Posterior cingulate gyrus (tissue), 11 donors: ENCODE measurements at regions of chr19 and their contacts with region 1.

Region 1: GRCh38 chr19:4471403-4472173 is 509 bp upstream of the HDGFL2 start:
- DNase-seq: peak; percentile 96 to 100 (median 98)

Region 2: DNA sequence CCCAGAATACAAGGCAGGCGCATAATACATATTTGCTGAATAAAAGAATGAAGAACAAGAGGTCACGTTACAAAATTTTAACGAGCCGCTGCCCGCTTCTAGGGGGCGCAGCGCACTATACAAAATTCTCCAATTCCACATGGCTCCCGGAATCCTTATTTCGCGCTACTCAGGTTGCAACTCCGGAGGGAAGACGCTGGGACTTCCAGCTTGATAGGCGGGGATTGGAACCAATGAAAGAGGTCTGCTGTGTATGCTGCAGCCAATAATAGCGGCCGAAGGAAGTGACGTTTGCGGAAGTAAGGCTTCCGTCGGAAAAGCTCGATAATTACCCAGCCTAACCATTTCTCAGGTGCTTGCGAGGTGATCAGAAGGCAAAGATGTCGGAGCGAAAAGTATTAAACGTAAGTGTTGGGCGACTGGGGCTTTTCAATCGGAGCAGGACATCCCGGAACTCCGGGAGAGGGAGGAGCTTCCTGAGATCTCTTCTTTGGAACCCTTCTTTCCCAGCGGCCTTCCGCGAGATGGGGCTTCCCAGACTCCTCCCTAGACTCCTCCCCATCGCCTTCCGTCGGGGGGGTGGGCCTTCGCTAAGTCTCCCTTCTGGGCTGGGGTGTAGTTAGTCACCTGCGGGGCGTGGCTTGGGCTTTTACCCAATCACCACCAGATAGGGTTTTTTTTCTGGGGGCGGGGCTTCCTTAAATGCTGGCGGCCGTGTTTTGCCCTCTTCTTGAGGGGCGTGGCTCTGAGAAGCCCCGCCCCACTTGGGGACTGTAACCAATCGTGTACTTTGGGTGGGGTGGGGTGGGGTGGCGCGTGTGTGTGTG is 224.6 kb before region 1 on chr19 and contains the start of gene YJU2:
- intact Hi-C with region 1: loop called (anchors 5 kb)
- DNase-seq: peak; percentile 88 to 99 (median 92)

Region 3: DNA sequence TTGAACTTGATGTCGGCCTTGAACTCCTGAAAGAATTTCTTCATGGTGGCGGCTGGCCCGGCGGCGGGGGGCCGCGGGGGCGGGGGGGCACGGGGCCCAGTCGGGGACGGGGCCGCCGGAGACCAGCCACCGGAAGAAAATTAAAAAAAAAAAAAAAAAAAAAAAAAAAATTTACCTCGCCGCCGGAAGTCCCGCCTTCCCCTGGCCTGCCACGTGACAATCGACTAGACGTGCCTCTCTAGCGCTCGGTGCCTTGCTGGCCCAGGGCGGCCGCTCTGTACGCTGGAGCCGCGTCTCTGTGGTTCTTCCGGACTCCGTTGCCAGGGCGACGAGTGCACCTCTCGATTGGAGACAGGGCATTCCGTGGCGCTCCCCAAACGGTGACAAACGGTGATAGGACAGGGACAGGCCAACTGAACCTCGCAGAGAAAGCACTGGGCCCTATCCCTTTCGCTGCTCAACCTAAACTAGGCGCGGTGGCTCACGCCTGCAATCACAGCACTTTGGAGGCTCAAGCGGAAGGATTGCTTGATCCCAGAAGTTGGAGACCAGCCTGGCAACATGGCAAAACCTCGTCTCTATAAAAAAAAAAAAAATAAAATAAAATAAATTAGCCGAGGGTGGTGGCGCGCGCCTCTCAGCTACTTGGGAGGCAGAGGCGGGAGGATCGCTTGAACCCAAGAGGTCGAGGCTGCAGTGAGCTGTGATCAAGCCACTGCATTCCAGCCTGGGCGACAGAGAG is 13.8 kb before region 1 on chr19 and contains the start of gene UBXN6:
- intact Hi-C with region 1: loop called (anchors 2 kb)
- DNase-seq: peak; percentile 96 to 100 (median 98)